Cardiac septum (tissue), 1 donor: ENCODE measurements at regions of chr1 and their contacts with region 1.

Region 1: DNA sequence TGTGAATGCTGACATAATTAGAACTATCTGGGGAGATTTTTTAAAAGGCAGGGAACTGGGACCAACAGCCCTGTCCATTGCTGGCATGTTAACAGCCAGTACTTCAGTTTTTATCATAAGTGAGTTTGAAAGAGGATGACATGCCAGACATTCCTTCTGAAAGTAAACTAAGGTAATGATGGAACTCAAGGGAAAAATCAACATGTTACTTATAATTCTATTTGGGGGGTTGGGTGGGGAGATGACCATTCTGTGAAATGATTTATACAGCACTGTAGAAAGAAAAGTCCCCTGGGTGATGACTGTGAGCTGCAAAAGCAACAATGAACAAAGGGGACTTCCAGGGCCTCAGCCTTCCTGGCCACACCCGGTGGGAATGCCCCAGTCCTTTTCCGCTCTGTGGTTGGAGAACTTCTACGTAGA is 5.4 kb upstream of the LAMC2 start:
- DNase-seq: peak; percentile 80

Region 2: GRCh38 chr1:183139281-183139942 is 41.2 kb before region 1 on chr1:
- intact Hi-C with region 1: loop called (anchors 5 kb)
- DNase-seq: no peak